ENCODE measurements at regions of chr1 and their contacts with region 1.

Region 1: GRCh38 chr1:221435504-221435904 is 306.4 kb downstream of the DUSP10 start:
- DNase-seq: no peak
- H3K4me3 Mint-ChIP-seq: no peak overlapping the region
- H3K27ac Mint-ChIP-seq: no peak overlapping the region
- H3K4me1 Mint-ChIP-seq: peaks cover 24% of the 10 kb centered on the region
- H3K27me3 Mint-ChIP-seq: peaks cover 2% of the 10 kb centered on the region

Region 2: DNA sequence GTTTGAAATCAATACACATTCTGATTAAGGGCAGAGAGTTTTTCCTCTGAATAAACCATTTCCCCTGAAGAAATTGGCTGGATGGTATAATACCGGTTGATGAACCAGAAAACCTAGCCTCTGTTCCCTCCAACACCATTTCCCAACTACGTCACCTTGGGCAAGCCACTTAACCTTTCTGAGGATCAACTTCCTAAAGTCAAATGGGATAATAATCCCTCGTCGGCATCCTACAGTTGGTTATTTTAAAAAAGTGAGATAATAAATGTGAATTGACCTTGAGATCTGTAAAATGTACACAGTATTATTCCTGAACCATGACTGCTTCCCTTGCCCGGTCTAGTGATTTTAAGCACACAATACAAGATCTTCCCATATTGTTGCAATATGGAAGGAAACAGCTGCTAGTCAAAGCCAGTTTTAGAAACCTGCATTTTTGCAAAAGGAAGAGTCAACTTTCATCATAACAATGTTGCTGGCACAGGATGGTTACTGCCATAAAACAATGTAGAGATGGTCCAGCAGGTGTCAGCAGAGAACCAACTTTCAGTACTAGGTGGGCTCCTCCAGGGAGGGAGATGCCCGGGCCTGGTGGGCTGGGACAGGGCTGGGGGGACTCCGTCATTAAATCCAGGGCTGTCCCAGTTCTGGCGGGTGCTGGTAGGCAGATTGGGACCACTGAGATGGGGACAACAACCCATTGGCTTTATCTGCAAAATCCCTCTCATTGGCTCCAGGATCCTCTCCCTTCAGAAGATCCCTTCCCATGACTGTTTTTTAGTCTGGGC is 561.4 kb before region 1 on chr1:
- intact Hi-C with region 1: loop called (anchors 1 kb)
- DNase-seq: no peak
- H3K4me3 Mint-ChIP-seq: no peak overlapping the region
- H3K27ac Mint-ChIP-seq: no peak overlapping the region
- H3K4me1 Mint-ChIP-seq: peaks cover 22% of the 10 kb centered on the region
- H3K27me3 Mint-ChIP-seq: peaks cover 58% of the 10 kb centered on the region

Region 3: GRCh38 chr1:221263831-221264767 is 171.4 kb before region 1 on chr1:
- intact Hi-C with region 1: loop called (anchors 1 kb)
- DNase-seq: peak; percentile 1
- H3K4me3 Mint-ChIP-seq: no peak overlapping the region
- H3K27ac Mint-ChIP-seq: no peak overlapping the region
- H3K4me1 Mint-ChIP-seq: no peaks in the 10 kb centered on the region
- H3K27me3 Mint-ChIP-seq: peaks cover 2% of the 10 kb centered on the region

Region 4: DNA sequence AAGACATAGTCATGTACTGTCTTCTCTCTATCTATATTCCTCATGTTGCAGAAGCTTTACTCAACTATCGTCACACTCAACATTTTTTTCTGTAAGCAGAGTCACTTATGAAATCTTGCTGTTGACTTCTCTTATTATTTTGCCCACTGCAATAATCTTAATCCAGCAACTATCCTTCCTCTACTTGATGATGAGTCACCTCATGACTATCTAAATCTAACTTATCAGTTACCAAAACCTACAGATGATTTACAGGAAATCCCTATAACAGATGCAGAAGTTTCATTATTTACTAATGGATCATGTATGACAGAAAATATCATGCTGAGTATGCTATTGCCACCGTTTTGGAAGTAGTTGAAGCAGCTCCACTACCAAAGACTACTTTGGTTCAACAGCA is 72.5 kb before region 1 on chr1:
- intact Hi-C with region 1: no loop called
- DNase-seq: no peak
- H3K4me3 Mint-ChIP-seq: no peak overlapping the region
- H3K27ac Mint-ChIP-seq: no peak overlapping the region
- H3K4me1 Mint-ChIP-seq: no peaks in the 10 kb centered on the region
- H3K27me3 Mint-ChIP-seq: peaks cover 6% of the 10 kb centered on the region

Region 5: DNA sequence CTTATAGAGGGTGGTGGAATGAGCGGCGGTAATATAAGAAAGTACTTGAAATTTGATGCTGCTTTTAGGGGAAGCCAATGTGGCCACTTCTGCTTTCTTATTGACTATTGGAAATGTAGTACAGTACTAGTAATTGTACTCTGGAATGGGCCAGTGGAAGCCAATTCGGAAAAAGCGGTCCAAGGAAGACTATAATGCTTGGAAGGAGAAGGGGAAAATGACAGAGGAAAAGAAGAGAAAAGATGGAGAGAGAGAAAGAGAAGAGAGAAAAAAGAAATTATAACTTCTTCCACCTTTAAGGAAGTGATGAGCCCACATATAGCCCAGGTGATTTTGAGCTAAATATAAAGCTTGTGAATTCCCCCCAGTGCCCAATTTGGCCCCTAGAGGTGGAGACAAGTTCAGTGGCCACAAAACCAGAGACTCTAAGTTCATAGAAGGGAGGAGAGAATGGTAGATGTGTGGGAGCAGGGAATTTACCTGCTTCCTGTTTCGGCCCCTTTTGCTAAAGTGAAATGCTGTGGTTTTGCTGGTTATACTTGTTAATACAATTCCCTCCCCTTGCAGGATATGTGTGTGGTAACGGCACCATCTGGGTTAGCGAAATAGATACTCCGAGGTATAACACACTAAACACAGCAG is 342.0 kb after region 1 on chr1:
- intact Hi-C with region 1: loop called (anchors 1 kb)
- DNase-seq: peak; percentile 55
- H3K4me3 Mint-ChIP-seq: peak overlapping the region; percentile 79
- H3K27ac Mint-ChIP-seq: peak overlapping the region; percentile 98
- H3K4me1 Mint-ChIP-seq: peaks cover 92% of the 10 kb centered on the region
- H3K27me3 Mint-ChIP-seq: no peaks in the 10 kb centered on the region

Region 6: GRCh38 chr1:221839796-221840395 is 404.4 kb after region 1 on chr1:
- intact Hi-C with region 1: loop called (anchors 1 kb)
- DNase-seq: peak; percentile 26
- H3K4me3 Mint-ChIP-seq: no peak overlapping the region
- H3K27ac Mint-ChIP-seq: peak overlapping the region; percentile 64
- H3K4me1 Mint-ChIP-seq: peaks cover 57% of the 10 kb centered on the region
- H3K27me3 Mint-ChIP-seq: peaks cover 2% of the 10 kb centered on the region

Region 7: GRCh38 chr1:222589462-222590302 is 1154.2 kb after region 1 on chr1 and contains the start of gene TAF1A:
- intact Hi-C with region 1: loop called (anchors 5 kb)
- DNase-seq: peak; percentile 77
- H3K4me3 Mint-ChIP-seq: peak within 1 kb of the TSS; percentile 92
- H3K27ac Mint-ChIP-seq: peak within 1 kb of the TSS; percentile 88
- H3K4me1 Mint-ChIP-seq: peaks cover 37% of the 10 kb centered on the region
- H3K27me3 Mint-ChIP-seq: peaks cover 6% of the 10 kb centered on the region
- total RNA-seq, gene TAF1A: 19.2 and 19.7 TPM in 2 replicates